ENCODE measurements at regions of chr14 and their contacts with region 1.

Region 1: GRCh38 chr14:50830932-50831725 is at the start of gene NIN:
- DNase-seq: peak; percentile 33 to 52
- ATAC-seq: peak; percentile 81 to 86
- H3K4me3 ChIP-seq: peak within 1 kb of the TSS; percentile 77 to 94 (median 88)
- H3K27ac ChIP-seq: peak within 1 kb of the TSS; percentile 84 to 92 (median 90)
- H3K4me1 ChIP-seq: peaks cover 25 to 29% of the 10 kb centered on the region in 2 donors
- H3K27me3 ChIP-seq: no peaks in the 10 kb centered on the region
- CTCF ChIP-seq: no peak
- POLR2A ChIP-seq: peak; percentile 65
- total RNA-seq, gene NIN: 16.2 to 49.3 (median 29.2) TPM

Region 2: DNA sequence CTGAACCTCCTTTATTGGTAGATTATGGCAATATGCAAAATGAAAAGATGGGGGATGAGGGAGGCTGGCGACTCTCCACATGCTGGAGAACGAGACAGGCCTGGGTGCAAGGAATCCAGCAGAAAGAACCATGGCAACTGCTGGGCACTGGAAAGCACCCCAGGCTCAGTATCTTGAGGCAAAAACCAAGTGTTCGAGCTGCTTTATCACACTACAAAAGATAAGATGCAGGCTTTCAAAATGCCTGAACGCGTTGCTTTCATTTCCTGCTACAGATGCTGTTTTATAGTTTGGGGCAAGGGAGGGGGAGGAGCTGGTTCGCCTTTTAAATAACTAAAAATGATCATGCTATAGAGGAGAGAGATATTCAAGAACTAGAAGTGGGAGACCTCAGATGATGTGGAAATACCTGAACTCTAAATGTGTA is 39.1 kb before region 1 on chr14:
- in situ Hi-C with region 1: no loop called
- intact Hi-C with region 1: loop called (anchors 5 kb)
- DNase-seq: no peak
- ATAC-seq: no peak
- H3K4me3 ChIP-seq: peak overlapping the region in 2 of 4 donors; percentile 10 to 43
- H3K27ac ChIP-seq: peak overlapping the region in 3 of 4 donors; percentile 72 to 82 (median 74)
- H3K4me1 ChIP-seq: peaks cover 35 to 43% of the 10 kb centered on the region in 2 donors
- H3K27me3 ChIP-seq: no peaks in the 10 kb centered on the region
- CTCF ChIP-seq: no peak
- POLR2A ChIP-seq: no peak